WTC11 (cell line): ENCODE measurements at regions of chr14 and their contacts with region 1.

Region 1: GRCh38 chr14:57871459-57872080 is 5.7 kb upstream of the SLC35F4 start:
- DNase-seq: peak; percentile 53
- ATAC-seq: peak; percentile 86
- H3K4me3 Mint-ChIP-seq: no peak overlapping the region
- H3K27ac Mint-ChIP-seq: no peak overlapping the region
- H3K4me1 Mint-ChIP-seq: peaks cover 24% of the 10 kb centered on the region
- H3K27me3 Mint-ChIP-seq: peaks cover 7% of the 10 kb centered on the region
- CTCF ChIP-seq: peak; percentile 71

Region 2: GRCh38 chr14:57526942-57527341 is 344.6 kb before region 1 on chr14:
- CTCF ChIA-PET with region 1: interaction called, 10 read pairs
- POLR2A ChIA-PET with region 1: no interaction called
- DNase-seq: peak; percentile 70
- ATAC-seq: peak; percentile 95
- H3K4me3 Mint-ChIP-seq: no peak overlapping the region
- H3K27ac Mint-ChIP-seq: no peak overlapping the region
- H3K4me1 Mint-ChIP-seq: no peaks in the 10 kb centered on the region
- H3K27me3 Mint-ChIP-seq: no peaks in the 10 kb centered on the region; the same call in 1 of the 2 replicates
- CTCF ChIP-seq: 0 out of 2 replicates have a peak, but pooled peaks have one; percentile 14

Region 3: GRCh38 chr14:57692671-57693070 is 178.9 kb before region 1 on chr14:
- CTCF ChIA-PET with region 1: interaction called, 20 read pairs
- POLR2A ChIA-PET with region 1: no interaction called
- DNase-seq: no peak
- ATAC-seq: peak; percentile 46; the same call in 1 of the 2 replicates
- H3K4me3 Mint-ChIP-seq: no peak overlapping the region
- H3K27ac Mint-ChIP-seq: no peak overlapping the region
- H3K4me1 Mint-ChIP-seq: peaks cover 4% of the 10 kb centered on the region
- H3K27me3 Mint-ChIP-seq: no peaks in the 10 kb centered on the region
- CTCF ChIP-seq: peak; percentile 16; the same call in 1 of the 2 replicates

Region 4: DNA sequence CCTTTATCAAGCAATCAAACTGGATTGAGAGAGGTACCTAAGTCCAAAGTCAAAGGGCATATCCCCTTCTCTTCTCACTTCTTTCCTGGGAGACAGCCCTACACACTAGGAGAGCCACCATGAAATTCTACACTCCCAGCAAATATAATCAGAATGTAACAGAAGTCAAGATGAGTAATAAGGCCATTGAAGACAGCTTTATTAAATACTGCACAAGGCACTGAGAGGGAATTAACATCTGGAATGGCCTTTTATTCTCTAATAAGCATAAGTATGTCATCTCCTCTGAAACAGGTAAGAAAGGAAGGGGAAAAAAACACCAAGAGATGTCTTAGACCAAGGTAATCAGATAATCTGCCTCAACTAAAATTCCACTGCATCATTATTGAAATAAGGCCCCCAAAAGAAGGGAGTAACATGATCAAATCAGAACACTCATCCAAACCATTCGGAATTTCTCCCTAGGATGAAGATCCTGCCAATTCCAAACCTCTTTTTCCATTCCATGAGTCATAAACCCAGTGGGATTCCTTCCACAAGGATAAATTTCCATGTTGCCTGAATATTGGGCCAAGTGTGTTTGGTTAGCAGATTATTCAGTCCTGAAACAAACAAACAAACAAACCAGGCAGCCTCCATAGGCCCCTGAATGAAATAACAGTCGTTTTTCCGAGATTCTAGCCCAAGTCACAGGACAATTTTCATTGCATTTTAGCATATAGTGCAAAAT is 25.6 kb before region 1 on chr14:
- CTCF ChIA-PET with region 1: no interaction called
- POLR2A ChIA-PET with region 1: no interaction called
- DNase-seq: no peak
- ATAC-seq: no peak
- H3K4me3 Mint-ChIP-seq: no peak overlapping the region
- H3K27ac Mint-ChIP-seq: no peak overlapping the region
- H3K4me1 Mint-ChIP-seq: no peaks in the 10 kb centered on the region
- H3K27me3 Mint-ChIP-seq: no peaks in the 10 kb centered on the region
- CTCF ChIP-seq: no peak

Region 5: DNA sequence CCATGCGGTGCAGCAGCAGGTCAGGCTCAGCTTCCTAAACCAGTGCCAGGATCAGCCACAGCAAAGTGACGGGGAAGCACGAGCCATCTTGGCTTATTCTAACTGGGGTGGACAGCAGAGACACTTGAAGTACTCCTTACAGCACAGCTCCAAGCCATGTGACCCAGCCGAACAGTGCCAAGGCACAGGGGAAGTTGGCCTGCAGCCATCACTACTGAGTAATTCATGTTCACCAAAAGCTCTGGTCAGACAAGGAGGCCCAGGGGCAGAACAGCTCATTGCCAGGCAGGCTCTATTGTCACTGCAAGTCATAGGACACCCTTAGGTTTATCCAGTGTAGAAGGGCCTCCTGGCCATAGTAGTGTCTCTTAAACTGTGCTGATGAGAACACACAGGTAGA is 17.7 kb after region 1 on chr14:
- CTCF ChIA-PET with region 1: interaction called, 11 read pairs
- POLR2A ChIA-PET with region 1: no interaction called
- DNase-seq: no peak
- ATAC-seq: no peak
- H3K4me3 Mint-ChIP-seq: no peak overlapping the region
- H3K27ac Mint-ChIP-seq: no peak overlapping the region
- H3K4me1 Mint-ChIP-seq: no peaks in the 10 kb centered on the region
- H3K27me3 Mint-ChIP-seq: no peaks in the 10 kb centered on the region
- CTCF ChIP-seq: no peak

Region 6: DNA sequence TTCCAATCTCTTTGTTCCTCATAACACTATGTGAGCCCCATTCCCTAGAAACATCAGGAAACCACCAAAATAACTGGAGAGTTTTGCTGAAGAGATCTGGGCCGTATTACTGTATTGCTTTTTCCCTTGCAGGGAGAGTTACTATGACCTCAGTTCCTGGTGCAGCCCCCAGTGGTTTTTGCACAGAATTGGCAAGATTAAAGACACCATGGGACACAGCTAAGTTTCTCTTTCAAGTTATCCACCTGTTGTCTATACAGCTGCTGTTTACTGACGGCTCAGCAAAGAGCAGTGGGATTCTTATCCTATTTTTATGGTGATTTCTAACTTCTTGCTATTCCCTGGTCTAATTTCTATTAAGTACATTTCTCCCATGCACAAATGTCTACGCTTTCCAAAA is 71.5 kb after region 1 on chr14:
- CTCF ChIA-PET with region 1: no interaction called
- POLR2A ChIA-PET with region 1: no interaction called
- DNase-seq: no peak
- ATAC-seq: peak; percentile 50
- H3K4me3 Mint-ChIP-seq: no peak overlapping the region
- H3K27ac Mint-ChIP-seq: 0 out of 2 replicates have a peak overlapping the region, but pooled peaks have one; percentile 1
- H3K4me1 Mint-ChIP-seq: peaks cover 37% of the 10 kb centered on the region
- H3K27me3 Mint-ChIP-seq: no peaks in the 10 kb centered on the region; the same call in 1 of the 2 replicates
- CTCF ChIP-seq: no peak